HepG2 (cell line): ENCODE measurements at regions of chr2 and their contacts with region 1.

Region 1: GRCh38 chr2:19362755-19363473 is 4.5 kb upstream of the OSR1 start:
- DNase-seq: peak; percentile 79
- ATAC-seq: peak; percentile 56
- H3K4me3 ChIP-seq: peak overlapping the region; percentile 59 to 84 (median 71)
- H3K27ac ChIP-seq: no peak overlapping the region
- H3K4me1 ChIP-seq: peaks cover 27% of the 10 kb centered on the region
- H3K27me3 ChIP-seq: peaks cover 14 to 69% of the 10 kb centered on the region in 2 experiments
- CTCF ChIP-seq: peak; percentile 87
- EP300 ChIP-seq: 0 out of 4 replicates have a peak, but pooled peaks of 1 of the 2 experiments have one; percentile 3
- POLR2A ChIP-seq: no peak
- RAD21 ChIP-seq: peak; percentile 89

Region 2: GRCh38 chr2:18435421-18436037 is 927.4 kb before region 1 on chr2:
- CTCF ChIA-PET with region 1: interaction called, 5 read pairs
- POLR2A ChIA-PET with region 1: no interaction called
- in situ Hi-C with region 1: no loop called
- intact Hi-C with region 1: loop called (anchors 5 kb)
- DNase-seq: peak; percentile 58
- ATAC-seq: peak; percentile 59
- H3K4me3 ChIP-seq: no peak overlapping the region
- H3K27ac ChIP-seq: no peak overlapping the region
- H3K4me1 ChIP-seq: no peaks in the 10 kb centered on the region
- H3K27me3 ChIP-seq: 0 out of 5 replicates have a peak, but pooled peaks cover 0 to 10% of the 10 kb centered on the region in 2 experiments
- CTCF ChIP-seq: peak; percentile 76
- EP300 ChIP-seq: no peak
- POLR2A ChIP-seq: no peak
- RAD21 ChIP-seq: 0 out of 2 replicates have a peak, but pooled peaks have one; percentile 31

Region 3: DNA sequence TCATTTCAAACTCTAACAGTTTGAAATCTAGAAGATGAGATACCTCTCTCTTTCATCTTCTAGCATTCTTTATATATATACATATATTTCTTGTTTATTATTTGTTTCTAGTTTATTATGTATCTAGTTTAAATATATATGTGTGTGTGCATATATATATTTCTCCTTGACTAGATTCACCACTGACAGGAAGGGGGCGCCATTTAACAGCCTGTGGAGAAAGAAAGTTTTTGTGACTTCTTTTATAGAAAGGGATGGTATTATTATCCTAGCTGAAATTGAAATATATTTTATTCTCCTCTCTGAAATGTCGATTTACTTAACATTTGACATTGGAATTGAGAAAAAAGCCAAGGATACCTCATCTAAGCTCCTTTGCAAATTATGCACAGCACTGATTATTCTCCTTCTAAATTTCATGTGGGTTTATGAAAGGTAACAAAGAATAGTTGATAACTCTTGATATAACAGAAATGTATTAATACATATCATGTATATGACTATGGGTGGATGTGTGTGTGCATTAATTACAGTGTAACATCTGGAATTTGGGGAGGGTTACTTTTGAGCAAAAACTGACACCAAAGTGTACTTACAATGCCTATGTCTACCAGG is 612.9 kb before region 1 on chr2:
- CTCF ChIA-PET with region 1: interaction called, 19 read pairs
- POLR2A ChIA-PET with region 1: no interaction called
- in situ Hi-C with region 1: loop called (anchors 5 kb)
- intact Hi-C with region 1: loop called (anchors 1 kb)
- DNase-seq: peak; percentile 65
- ATAC-seq: 0 out of 3 replicates have a peak, but pooled peaks have one; percentile 19
- H3K4me3 ChIP-seq: no peak overlapping the region
- H3K27ac ChIP-seq: no peak overlapping the region
- H3K4me1 ChIP-seq: peaks cover 21% of the 10 kb centered on the region
- H3K27me3 ChIP-seq: no peaks in the 10 kb centered on the region
- CTCF ChIP-seq: peak; percentile 72
- EP300 ChIP-seq: no peak
- POLR2A ChIP-seq: no peak
- RAD21 ChIP-seq: peak; percentile 58; the same call in 1 of the 2 replicates

Region 4: GRCh38 chr2:19020550-19021476 is 342.1 kb before region 1 on chr2:
- CTCF ChIA-PET with region 1: no interaction called
- POLR2A ChIA-PET with region 1: interaction called, 11 read pairs
- in situ Hi-C with region 1: no loop called
- intact Hi-C with region 1: no loop called
- DNase-seq: peak; percentile 84
- ATAC-seq: peak; percentile 80
- H3K4me3 ChIP-seq: peak overlapping the region; percentile 27 to 63 (median 42); a peak in 5 of 6 replicates
- H3K27ac ChIP-seq: peak overlapping the region; percentile 52
- H3K4me1 ChIP-seq: peaks cover 29% of the 10 kb centered on the region
- H3K27me3 ChIP-seq: no peaks in the 10 kb centered on the region
- CTCF ChIP-seq: no peak
- EP300 ChIP-seq: no peak; a peak in 1 of 4 replicates
- POLR2A ChIP-seq: no peak
- RAD21 ChIP-seq: no peak

Region 5: DNA sequence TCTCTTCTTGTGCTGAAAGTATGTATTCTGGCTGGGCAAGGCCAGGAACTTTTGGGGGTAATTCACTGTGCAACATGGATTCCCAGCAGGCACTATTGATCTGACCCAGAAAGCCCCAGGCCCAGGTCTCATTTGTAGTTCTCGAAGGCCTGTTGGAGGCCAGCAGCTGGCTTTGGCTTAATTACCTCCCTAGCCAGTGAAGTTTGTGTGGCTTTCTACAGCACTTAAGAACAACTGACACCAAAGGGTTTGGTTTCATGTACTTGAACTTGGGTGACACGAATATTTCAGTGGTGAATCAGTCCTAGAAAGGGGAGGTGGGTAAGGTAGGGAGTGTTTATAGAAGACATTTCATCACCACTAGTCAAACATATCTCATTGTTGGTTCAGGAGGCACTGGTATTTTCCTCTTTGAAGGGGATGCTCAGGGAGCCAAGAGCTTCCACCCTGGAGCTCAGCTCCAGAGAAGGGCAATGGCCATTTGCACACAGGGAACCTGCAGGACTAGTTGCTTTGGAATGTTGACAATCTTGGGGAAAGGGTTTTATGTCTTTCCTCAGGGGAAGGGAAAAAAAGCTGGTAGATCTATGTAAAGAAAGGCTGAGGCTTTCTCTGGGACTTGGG is 222.2 kb before region 1 on chr2:
- CTCF ChIA-PET with region 1: no interaction called
- POLR2A ChIA-PET with region 1: interaction called, 3 read pairs
- in situ Hi-C with region 1: no loop called
- intact Hi-C with region 1: loop called (anchors 2 kb)
- DNase-seq: peak; percentile 99
- ATAC-seq: peak; percentile 100
- H3K4me3 ChIP-seq: no peak overlapping the region
- H3K27ac ChIP-seq: no peak overlapping the region
- H3K4me1 ChIP-seq: peaks cover 19% of the 10 kb centered on the region
- H3K27me3 ChIP-seq: no peaks in the 10 kb centered on the region
- CTCF ChIP-seq: no peak
- EP300 ChIP-seq: peak; percentile 75 to 93
- POLR2A ChIP-seq: no peak
- RAD21 ChIP-seq: no peak

Region 6: DNA sequence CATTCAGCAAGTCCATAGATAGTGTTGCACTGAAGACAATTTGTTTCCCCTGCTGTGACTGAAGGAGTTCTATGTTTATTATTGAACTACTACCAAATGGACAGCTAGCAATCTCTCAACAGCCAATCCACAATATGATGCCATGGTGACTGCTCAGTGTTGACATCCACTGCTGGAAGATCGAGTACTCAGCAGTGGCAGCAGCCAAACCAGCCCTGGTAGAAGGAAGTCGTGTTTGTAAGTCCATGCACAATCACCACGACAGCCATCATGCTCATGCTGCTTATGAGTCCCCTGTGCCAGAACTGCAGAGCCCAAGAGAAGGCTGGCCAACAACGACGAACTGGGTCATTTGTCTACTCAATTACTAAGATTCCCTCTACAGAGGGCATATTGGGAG is 70.9 kb before region 1 on chr2:
- CTCF ChIA-PET with region 1: no interaction called
- POLR2A ChIA-PET with region 1: no interaction called
- in situ Hi-C with region 1: no loop called
- intact Hi-C with region 1: no loop called
- DNase-seq: no peak
- ATAC-seq: no peak
- H3K4me3 ChIP-seq: no peak overlapping the region
- H3K27ac ChIP-seq: no peak overlapping the region
- H3K4me1 ChIP-seq: no peaks in the 10 kb centered on the region
- H3K27me3 ChIP-seq: no peaks in the 10 kb centered on the region
- CTCF ChIP-seq: no peak
- EP300 ChIP-seq: no peak
- POLR2A ChIP-seq: no peak
- RAD21 ChIP-seq: no peak

Region 7: GRCh38 chr2:19392221-19392620 is 29.3 kb after region 1 on chr2:
- CTCF ChIA-PET with region 1: no interaction called
- POLR2A ChIA-PET with region 1: no interaction called
- in situ Hi-C with region 1: no loop called
- intact Hi-C with region 1: no loop called
- DNase-seq: no peak
- ATAC-seq: no peak
- H3K4me3 ChIP-seq: no peak overlapping the region
- H3K27ac ChIP-seq: no peak overlapping the region
- H3K4me1 ChIP-seq: no peaks in the 10 kb centered on the region
- H3K27me3 ChIP-seq: no peaks in the 10 kb centered on the region
- CTCF ChIP-seq: no peak
- EP300 ChIP-seq: no peak
- POLR2A ChIP-seq: no peak
- RAD21 ChIP-seq: no peak

Region 8: GRCh38 chr2:19574778-19575260 is 211.9 kb after region 1 on chr2:
- CTCF ChIA-PET with region 1: no interaction called
- POLR2A ChIA-PET with region 1: no interaction called
- in situ Hi-C with region 1: loop called (anchors 10 kb)
- intact Hi-C with region 1: loop called (anchors 5 kb)
- DNase-seq: no peak
- ATAC-seq: no peak
- H3K4me3 ChIP-seq: no peak overlapping the region
- H3K27ac ChIP-seq: no peak overlapping the region
- H3K4me1 ChIP-seq: peaks cover 2% of the 10 kb centered on the region
- H3K27me3 ChIP-seq: peaks cover 0 to 7% of the 10 kb centered on the region in 2 experiments; a peak in 1 of 5 replicates
- CTCF ChIP-seq: no peak
- EP300 ChIP-seq: no peak
- POLR2A ChIP-seq: no peak
- RAD21 ChIP-seq: no peak

Region 9: GRCh38 chr2:19863303-19864041 is 500.6 kb after region 1 on chr2:
- CTCF ChIA-PET with region 1: no interaction called
- POLR2A ChIA-PET with region 1: no interaction called
- in situ Hi-C with region 1: loop called (anchors 5 kb)
- intact Hi-C with region 1: loop called (anchors 2 kb)
- DNase-seq: peak; percentile 76
- ATAC-seq: peak; percentile 96
- H3K4me3 ChIP-seq: peak overlapping the region; percentile 46 to 77 (median 57)
- H3K27ac ChIP-seq: peak overlapping the region; percentile 26
- H3K4me1 ChIP-seq: peaks cover 36% of the 10 kb centered on the region
- H3K27me3 ChIP-seq: peaks cover 2 to 18% of the 10 kb centered on the region in 2 experiments; a peak in 3 of 5 replicates
- CTCF ChIP-seq: peak; percentile 100
- EP300 ChIP-seq: no peak
- POLR2A ChIP-seq: peak in 1 of 2 experiments; percentile 60; a peak in 2 of 4 replicates
- RAD21 ChIP-seq: peak; percentile 100